ENCODE measurements at regions of chr7 and their contacts with region 1.

Region 1: DNA sequence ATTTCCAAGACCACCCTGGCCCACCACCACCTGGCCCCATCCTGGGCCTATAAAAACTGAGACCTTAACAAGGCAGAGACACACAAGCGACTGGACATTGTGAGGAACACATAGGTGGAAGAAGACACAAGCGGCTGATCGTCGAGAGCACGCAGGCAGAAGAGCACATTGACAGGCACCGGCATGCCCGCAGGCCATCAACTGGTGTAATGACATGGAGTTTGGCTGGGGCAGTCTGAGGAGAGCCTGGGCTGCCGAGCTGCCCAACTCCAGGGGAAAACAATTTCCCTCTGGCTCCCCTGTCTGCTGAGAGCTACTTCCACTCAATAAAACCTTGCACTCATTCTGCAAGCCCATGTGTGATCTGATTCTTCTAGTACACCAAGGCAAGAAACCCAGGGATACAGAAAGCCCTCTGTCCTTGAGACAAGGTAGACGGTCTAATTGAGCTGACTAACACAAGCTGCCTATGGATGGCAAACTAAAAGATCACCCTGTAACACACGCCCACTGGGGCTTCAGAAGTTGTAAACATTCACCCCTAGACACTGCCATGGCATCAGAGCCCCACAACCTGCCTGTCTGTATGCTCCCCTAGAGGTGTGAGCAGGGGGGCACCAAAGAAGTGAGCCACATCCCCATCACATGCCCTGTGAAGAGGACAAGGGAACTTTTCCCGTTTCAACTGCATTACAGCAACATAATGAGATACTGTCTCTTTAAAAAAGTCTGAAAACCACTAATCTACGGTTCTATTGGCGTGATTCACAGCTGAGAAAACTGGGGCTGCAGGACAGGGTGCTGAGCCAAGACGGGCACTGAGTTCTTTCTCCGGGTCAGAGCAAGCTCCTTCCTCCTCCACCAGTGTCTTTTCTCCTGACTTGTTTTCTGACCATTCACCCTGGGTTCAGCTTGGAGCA is 18.5 kb upstream of the TNS3 start:
- DNase-seq: peak; percentile 70 to 88
- H3K4me3 ChIP-seq: peak overlapping the region; percentile 38; the same call in 1 of the 2 replicates
- H3K27ac ChIP-seq: peak overlapping the region; percentile 98
- H3K4me1 ChIP-seq: peaks cover 68% of the 10 kb centered on the region
- H3K27me3 ChIP-seq: no peaks in the 10 kb centered on the region
- CTCF ChIP-seq: no peak

Region 2: DNA sequence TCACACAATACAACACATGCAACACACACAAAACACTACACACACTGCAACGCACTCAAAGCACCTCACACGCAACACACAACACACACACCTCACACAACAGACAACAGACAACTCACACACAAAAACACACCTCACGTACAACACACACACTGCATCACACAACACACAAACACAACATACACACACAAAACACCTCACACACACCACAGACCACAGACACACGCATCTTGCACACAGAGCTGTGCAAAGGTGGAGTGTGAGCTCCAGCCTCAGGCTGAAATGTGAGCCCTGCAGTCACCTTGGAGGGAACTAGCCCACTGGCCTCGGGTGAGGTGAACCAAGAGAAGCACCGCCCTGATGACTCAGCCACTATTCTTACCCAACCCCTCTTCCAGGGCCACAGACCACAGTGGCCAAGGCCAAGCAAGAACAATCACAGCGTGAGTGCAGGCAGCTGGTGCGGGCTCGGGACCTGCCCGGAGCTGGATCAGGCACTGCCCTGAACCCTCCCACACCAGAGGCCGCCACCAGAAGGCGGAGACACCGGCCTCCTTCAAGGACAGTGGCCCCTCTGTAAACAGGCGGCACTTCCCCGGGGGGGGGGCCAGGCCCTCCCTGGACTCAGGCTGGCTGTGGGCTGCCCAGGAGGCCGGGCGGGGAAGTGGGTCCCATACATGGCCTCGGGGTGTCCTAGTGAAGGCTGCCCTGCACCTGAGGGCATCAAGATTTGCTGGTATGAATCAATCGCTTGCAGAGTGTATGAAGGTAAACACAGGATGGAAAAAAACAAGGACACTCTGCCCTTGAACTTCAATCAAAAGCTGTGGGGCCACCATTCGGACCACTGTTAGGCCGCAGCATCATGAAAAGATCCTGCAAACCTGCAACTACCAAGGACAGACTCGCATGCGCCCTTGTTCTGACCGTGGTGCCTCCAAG is 125.3 kb before region 1 on chr7:
- CTCF ChIA-PET with region 1: no interaction called
- POLR2A ChIA-PET with region 1: no interaction called
- intact Hi-C with region 1: loop called (anchors 1 kb)
- DNase-seq: peak; percentile 99 to 100
- H3K4me3 ChIP-seq: peak overlapping the region; percentile 16; the same call in 1 of the 2 replicates
- H3K27ac ChIP-seq: peak overlapping the region; percentile 87
- H3K4me1 ChIP-seq: peaks cover 58% of the 10 kb centered on the region
- H3K27me3 ChIP-seq: no peaks in the 10 kb centered on the region
- CTCF ChIP-seq: no peak; the same call in 1 of the 2 replicates

Region 3: DNA sequence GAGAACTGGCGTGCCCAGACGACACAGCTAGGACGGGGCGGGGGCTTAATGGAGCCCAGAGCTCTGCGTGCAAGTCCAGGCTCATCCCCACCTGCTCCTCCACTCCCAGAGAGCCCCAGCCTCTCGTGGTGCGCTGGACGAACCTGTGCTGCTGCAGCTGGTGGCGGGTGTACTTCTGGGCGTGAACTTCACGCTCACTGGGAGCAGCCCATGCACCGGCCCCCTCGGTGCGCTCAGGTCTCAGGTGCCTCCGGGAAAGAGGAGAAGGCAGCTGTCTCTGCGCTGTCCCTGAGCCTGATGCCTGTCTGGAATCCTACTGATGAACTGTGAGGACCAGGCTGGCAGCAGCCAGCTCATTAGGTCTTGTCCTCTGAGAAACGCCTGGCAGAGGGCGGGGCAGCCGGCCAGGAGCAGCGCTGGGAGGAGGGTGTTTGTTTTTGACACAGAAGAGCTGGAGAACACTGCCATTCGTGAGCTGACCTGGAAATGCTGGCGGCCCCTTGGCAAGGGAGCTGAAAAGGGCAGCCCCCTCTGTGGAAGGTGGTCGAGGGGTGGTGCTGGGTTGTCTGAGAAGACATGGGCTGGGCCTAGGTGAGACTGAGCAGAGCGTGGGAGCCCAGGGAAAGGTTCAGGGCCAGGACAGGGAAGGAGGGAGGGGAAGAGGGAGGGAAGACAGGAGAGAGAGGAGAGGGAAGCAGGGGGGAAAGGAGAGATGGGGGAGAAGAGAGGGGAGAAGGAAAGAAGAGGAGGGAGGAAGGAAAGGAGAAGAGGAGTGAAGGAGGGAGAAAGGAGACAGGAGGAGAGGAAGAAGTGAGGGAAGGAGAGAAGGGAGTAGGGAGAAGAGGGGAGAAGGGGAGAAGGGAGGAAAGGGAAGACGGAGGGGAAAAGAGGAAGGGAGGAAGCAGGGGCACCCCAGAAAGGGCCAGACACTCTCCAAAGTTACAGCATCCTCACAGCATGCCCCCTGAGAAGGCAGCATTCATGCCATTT is 34.9 kb after region 1 on chr7:
- CTCF ChIA-PET with region 1: no interaction called
- POLR2A ChIA-PET with region 1: interaction called, 4 read pairs
- intact Hi-C with region 1: loop called (anchors 2 kb)
- DNase-seq: peak; percentile 80 to 82
- H3K4me3 ChIP-seq: peak overlapping the region; percentile 48
- H3K27ac ChIP-seq: peak overlapping the region; percentile 40
- H3K4me1 ChIP-seq: peaks cover 33% of the 10 kb centered on the region
- H3K27me3 ChIP-seq: no peaks in the 10 kb centered on the region
- CTCF ChIP-seq: no peak

Region 4: GRCh38 chr7:47677667-47678111 is 77.2 kb after region 1 on chr7:
- CTCF ChIA-PET with region 1: no interaction called
- POLR2A ChIA-PET with region 1: no interaction called
- intact Hi-C with region 1: loop called (anchors 2 kb)
- DNase-seq: peak; percentile 28 to 99
- H3K4me3 ChIP-seq: no peak overlapping the region
- H3K27ac ChIP-seq: peak overlapping the region; percentile 88
- H3K4me1 ChIP-seq: peaks cover 58% of the 10 kb centered on the region
- H3K27me3 ChIP-seq: no peaks in the 10 kb centered on the region
- CTCF ChIP-seq: no peak

Region 5: GRCh38 chr7:47724335-47724982 is 124.0 kb after region 1 on chr7:
- CTCF ChIA-PET with region 1: no interaction called
- POLR2A ChIA-PET with region 1: no interaction called
- intact Hi-C with region 1: loop called (anchors 1 kb)
- DNase-seq: peak; percentile 67 to 90
- H3K4me3 ChIP-seq: peak overlapping the region; percentile 16; the same call in 1 of the 2 replicates
- H3K27ac ChIP-seq: peak overlapping the region; percentile 94
- H3K4me1 ChIP-seq: peaks cover 30% of the 10 kb centered on the region
- H3K27me3 ChIP-seq: no peaks in the 10 kb centered on the region
- CTCF ChIP-seq: no peak

Measured in PC-9 (cell line).